ENCODE measurements at regions of chr13 and their contacts with region 1.

Region 1: GRCh38 chr13:36346222-36347083 is at the start of gene SPART:
- DNase-seq: peak; percentile 74
- ATAC-seq: peak; percentile 90
- H3K4me3 Mint-ChIP-seq: peak within 1 kb of the TSS; percentile 92
- H3K27ac Mint-ChIP-seq: peak within 1 kb of the TSS; percentile 90
- H3K4me1 Mint-ChIP-seq: peaks cover 26% of the 10 kb centered on the region
- H3K27me3 Mint-ChIP-seq: peaks cover 10% of the 10 kb centered on the region
- CTCF ChIP-seq: peak; percentile 90
- total RNA-seq, gene SPART: 17.2 and 19.8 TPM in 2 replicates

Region 2: GRCh38 chr13:36282818-36283445 is 63.5 kb before region 1 on chr13:
- CTCF ChIA-PET with region 1: no interaction called
- POLR2A ChIA-PET with region 1: no interaction called
- intact Hi-C with region 1: loop called (anchors 2 kb)
- DNase-seq: no peak
- ATAC-seq: no peak
- H3K4me3 Mint-ChIP-seq: no peak overlapping the region
- H3K27ac Mint-ChIP-seq: no peak overlapping the region
- H3K4me1 Mint-ChIP-seq: no peaks in the 10 kb centered on the region
- H3K27me3 Mint-ChIP-seq: no peaks in the 10 kb centered on the region
- CTCF ChIP-seq: no peak

Region 3: DNA sequence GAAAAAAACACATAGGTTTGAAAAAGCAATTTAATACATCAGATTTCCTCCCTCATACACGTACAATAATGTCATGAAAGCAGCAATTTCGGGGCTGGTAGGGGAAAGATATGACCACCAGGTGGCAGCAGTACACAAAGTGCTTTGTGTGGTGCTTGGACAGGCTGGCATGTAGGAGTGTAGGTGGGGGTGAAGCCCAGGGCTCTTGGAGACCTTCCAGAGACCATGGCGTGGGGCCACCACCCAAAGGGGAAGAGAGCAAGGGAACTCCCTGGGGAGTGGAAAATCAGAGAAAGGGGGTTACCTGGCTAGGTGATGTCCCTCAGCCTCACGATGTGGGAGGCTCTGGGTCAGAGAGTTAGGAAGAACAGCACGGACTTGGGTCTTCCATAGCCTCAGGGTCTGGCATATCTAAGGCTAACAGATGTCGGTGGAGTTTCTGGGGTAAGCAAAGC is 74.0 kb after region 1 on chr13:
- CTCF ChIA-PET with region 1: interaction called, 4 read pairs
- POLR2A ChIA-PET with region 1: no interaction called
- intact Hi-C with region 1: loop called (anchors 1 kb)
- DNase-seq: peak; percentile 34
- ATAC-seq: peak; percentile 86
- H3K4me3 Mint-ChIP-seq: no peak overlapping the region
- H3K27ac Mint-ChIP-seq: no peak overlapping the region
- H3K4me1 Mint-ChIP-seq: peaks cover 8% of the 10 kb centered on the region
- H3K27me3 Mint-ChIP-seq: peaks cover 13% of the 10 kb centered on the region
- CTCF ChIP-seq: peak; percentile 92

Region 4: DNA sequence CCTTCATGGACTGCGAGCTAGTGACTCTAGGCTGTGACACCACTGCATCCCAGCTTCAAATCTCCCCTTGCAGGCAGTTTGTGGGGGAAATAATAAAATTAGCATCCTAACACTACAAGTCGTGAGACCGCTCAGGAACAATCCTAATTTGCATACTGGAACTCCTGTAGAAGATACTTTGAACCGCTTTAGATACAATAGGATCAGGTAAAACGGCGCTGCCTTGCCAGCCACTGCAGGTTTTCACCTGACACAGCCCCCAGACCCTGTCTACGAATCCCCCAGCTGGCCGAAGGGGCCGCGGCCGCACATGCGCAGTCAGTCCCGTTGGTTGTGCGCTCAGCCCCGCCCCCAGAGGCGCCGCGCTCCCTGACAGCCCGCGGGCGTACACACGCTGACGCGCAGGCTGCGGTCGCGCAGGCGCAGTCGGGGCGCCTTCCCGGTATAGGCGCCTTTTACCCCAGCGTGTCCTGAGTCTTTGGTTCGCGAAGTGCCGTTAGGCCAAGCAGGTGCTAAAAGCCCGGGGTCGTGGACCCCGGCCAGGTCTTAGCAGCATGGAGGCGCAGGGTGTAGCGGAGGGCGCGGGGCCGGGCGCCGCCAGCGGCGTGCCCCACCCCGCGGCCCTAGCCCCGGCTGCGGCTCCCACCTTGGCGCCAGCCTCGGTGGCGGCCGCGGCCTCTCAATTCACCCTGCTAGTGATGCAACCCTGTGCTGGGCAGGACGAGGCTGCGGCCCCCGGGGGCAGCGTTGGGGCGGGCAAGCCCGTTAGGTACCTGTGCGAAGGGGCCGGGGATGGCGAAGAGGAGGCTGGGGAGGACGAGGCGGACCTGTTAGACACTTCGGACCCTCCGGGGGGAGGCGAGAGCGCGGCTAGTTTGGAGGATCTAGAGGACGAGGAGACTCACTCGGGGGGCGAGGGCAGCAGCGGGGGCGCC is 472.6 kb after region 1 on chr13 and contains the start of gene RFXAP:
- CTCF ChIA-PET with region 1: no interaction called
- POLR2A ChIA-PET with region 1: no interaction called
- intact Hi-C with region 1: loop called (anchors 1 kb)
- DNase-seq: peak; percentile 93
- ATAC-seq: peak; percentile 94
- H3K4me3 Mint-ChIP-seq: peak within 1 kb of the TSS; percentile 93
- H3K27ac Mint-ChIP-seq: peak within 1 kb of the TSS; percentile 90
- H3K4me1 Mint-ChIP-seq: peaks cover 44% of the 10 kb centered on the region
- H3K27me3 Mint-ChIP-seq: peaks cover 6% of the 10 kb centered on the region
- CTCF ChIP-seq: no peak
- total RNA-seq, gene RFXAP: 8.8 and 9.6 TPM in 2 replicates

Region 5: DNA sequence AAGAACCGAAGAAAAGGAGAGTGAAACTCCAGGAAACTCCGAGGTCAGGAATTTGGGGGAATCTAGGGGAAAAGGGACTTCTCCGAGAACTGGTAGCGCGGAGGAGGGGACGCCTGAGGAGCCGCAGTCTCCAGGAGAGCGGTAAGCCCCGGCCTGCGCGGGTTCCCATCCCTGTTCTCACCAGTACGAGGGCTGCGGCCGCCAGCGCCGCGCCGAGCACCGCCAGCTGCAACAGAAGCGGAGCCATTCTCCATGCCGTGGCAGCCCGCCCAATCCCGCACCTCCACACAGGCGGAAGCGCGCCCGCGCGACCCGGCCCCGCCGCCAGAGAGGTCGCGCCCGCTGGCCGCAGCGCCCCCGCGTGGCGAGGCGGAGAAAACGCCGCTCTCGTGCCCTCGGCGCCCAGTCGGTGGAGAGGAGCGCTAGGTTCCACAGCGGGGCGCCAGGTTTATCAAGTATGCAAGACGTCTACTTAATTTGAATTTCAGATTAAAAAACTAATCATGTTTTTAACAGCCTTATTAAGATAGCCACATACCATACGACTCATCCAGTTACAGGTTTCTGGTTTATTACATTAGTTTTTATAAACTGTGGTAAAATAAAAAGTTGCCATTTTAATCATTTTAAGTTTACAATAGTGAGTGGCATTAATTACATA is 652.7 kb after region 1 on chr13 and contains the start of gene ALG5:
- CTCF ChIA-PET with region 1: no interaction called
- POLR2A ChIA-PET with region 1: interaction called, 8 read pairs
- intact Hi-C with region 1: loop called (anchors 1 kb)
- DNase-seq: peak; percentile 96
- ATAC-seq: peak; percentile 72
- H3K4me3 Mint-ChIP-seq: peak within 1 kb of the TSS; percentile 99
- H3K27ac Mint-ChIP-seq: peak within 1 kb of the TSS; percentile 100
- H3K4me1 Mint-ChIP-seq: peaks cover 35% of the 10 kb centered on the region
- H3K27me3 Mint-ChIP-seq: no peaks in the 10 kb centered on the region
- CTCF ChIP-seq: peak; percentile 53
- total RNA-seq, gene ALG5: 24.0 and 25.8 TPM in 2 replicates